T-cell (primary cell): ENCODE measurements at regions of chr5 and their contacts with region 1.

Region 1: GRCh38 chr5:138575194-138576015 is at the start of gene HSPA9:
- DNase-seq: peak; percentile 94 to 100 (median 97)
- ATAC-seq: peak; percentile 85 to 88 (median 86)
- H3K4me3 ChIP-seq: peak within 1 kb of the TSS; percentile 95 to 99
- H3K4me3 Mint-ChIP-seq: peak within 1 kb of the TSS; percentile 96
- H3K27ac ChIP-seq: peak within 1 kb of the TSS; percentile 94
- H3K27ac Mint-ChIP-seq: peak within 1 kb of the TSS; percentile 100
- H3K4me1 ChIP-seq: peaks cover 8 to 26% of the 10 kb centered on the region in 2 experiments
- H3K4me1 Mint-ChIP-seq: peaks cover 29 to 43% (median 35%) of the 10 kb centered on the region in 3 donors
- H3K27me3 ChIP-seq: no peaks in the 10 kb centered on the region
- H3K27me3 Mint-ChIP-seq: no peaks in the 10 kb centered on the region
- total RNA-seq, gene HSPA9: 148 to 299 (median 162) TPM

Region 2: GRCh38 chr5:138542956-138543729 is 32.3 kb before region 1 on chr5 and contains the start of gene ETF1:
- CTCF ChIA-PET with region 1: interaction called, 4 to 11 read pairs
- POLR2A ChIA-PET with region 1: interaction called, 8 to 32 read pairs
- DNase-seq: peak; percentile 96 to 100 (median 100)
- ATAC-seq: peak; percentile 89 to 94 (median 90)
- H3K4me3 ChIP-seq: peak within 1 kb of the TSS; percentile 97 to 99
- H3K4me3 Mint-ChIP-seq: peak within 1 kb of the TSS; percentile 94 to 100 (median 100)
- H3K27ac ChIP-seq: peak within 1 kb of the TSS; percentile 100
- H3K27ac Mint-ChIP-seq: peak within 1 kb of the TSS; percentile 100
- H3K4me1 ChIP-seq: peaks cover 39 to 47% of the 10 kb centered on the region in 2 experiments
- H3K4me1 Mint-ChIP-seq: peaks cover 77 to 85% (median 78%) of the 10 kb centered on the region in 3 donors
- H3K27me3 ChIP-seq: no peaks in the 10 kb centered on the region
- H3K27me3 Mint-ChIP-seq: no peaks in the 10 kb centered on the region
- total RNA-seq, gene ETF1: 40.1 to 115 (median 43.2) TPM

Region 3: GRCh38 chr5:138704793-138705600 is 129.6 kb after region 1 on chr5:
- CTCF ChIA-PET with region 1: interaction called in 1 of 2 experiments, 10 read pairs
- POLR2A ChIA-PET with region 1: no interaction called
- DNase-seq: no peak
- ATAC-seq: no peak
- H3K4me3 ChIP-seq: no peak overlapping the region
- H3K4me3 Mint-ChIP-seq: no peak overlapping the region
- H3K27ac ChIP-seq: no peak overlapping the region
- H3K27ac Mint-ChIP-seq: no peak overlapping the region
- H3K4me1 ChIP-seq: no peaks in the 10 kb centered on the region
- H3K4me1 Mint-ChIP-seq: no peaks in the 10 kb centered on the region
- H3K27me3 ChIP-seq: peaks cover 0 to 44% of the 10 kb centered on the region in 2 experiments
- H3K27me3 Mint-ChIP-seq: peaks cover 73 to 74% of the 10 kb centered on the region in 2 donors

Region 4: GRCh38 chr5:139593716-139594319 is 1018.4 kb after region 1 on chr5:
- CTCF ChIA-PET with region 1: no interaction called
- POLR2A ChIA-PET with region 1: interaction called in 1 of 2 experiments, 14 read pairs
- DNase-seq: no peak
- ATAC-seq: no peak
- H3K4me3 ChIP-seq: no peak overlapping the region
- H3K4me3 Mint-ChIP-seq: no peak overlapping the region
- H3K27ac ChIP-seq: no peak overlapping the region
- H3K27ac Mint-ChIP-seq: peak overlapping the region in 1 of 2 donors; percentile 6
- H3K4me1 ChIP-seq: peaks cover 7 to 37% of the 10 kb centered on the region in 2 experiments
- H3K4me1 Mint-ChIP-seq: peaks cover 60 to 66% (median 63%) of the 10 kb centered on the region in 3 donors
- H3K27me3 ChIP-seq: no peaks in the 10 kb centered on the region
- H3K27me3 Mint-ChIP-seq: no peaks in the 10 kb centered on the region